Left lung (tissue), 14 donors: ENCODE measurements at regions of chr12 and their contacts with region 1.

Region 1: GRCh38 chr12:54324617-54325441 is at the start of gene COPZ1:
- DNase-seq: peak; percentile 94 to 98 (median 95)
- ATAC-seq: peak; percentile 95
- H3K4me3 ChIP-seq: peak within 1 kb of the TSS; percentile 71 to 87
- H3K27ac ChIP-seq: peak within 1 kb of the TSS; percentile 88
- H3K4me1 ChIP-seq: peaks cover 9 to 59% of the 10 kb centered on the region in 2 donors
- H3K27me3 ChIP-seq: no peaks in the 10 kb centered on the region
- CTCF ChIP-seq: peak; percentile 65 to 71
- polyA plus RNA-seq, gene COPZ1: 183 to 232 (median 219) TPM

Region 2: DNA sequence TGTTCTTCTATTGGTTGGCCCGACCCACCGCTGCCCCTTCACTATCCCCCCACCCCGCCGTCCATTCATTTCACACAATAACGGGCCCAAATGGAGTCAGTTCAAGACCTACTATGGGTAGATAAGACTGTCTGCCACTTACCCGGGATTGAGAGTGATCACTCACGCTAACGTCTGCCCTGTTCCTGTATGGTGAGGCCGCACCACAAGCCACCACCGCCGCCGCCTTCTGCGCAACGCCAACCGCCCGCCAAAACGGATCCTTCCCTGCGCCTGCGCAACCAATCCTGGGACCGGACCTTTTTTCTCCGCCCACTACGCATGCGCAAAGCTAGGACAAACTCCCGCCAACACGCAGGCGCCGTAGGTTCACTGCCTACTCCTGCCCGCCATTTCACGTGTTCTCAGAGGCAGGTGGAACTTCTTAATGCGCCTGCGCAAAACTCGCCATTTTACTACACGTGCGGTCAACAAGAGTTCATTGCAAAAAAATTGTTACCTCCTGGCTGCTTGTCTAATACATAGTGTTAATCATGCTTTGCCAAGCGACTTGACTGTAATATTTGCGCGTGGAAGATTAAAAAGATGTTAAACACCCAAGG is 44.9 kb before region 1 on chr12 and contains the start of gene CBX5:
- intact Hi-C with region 1: loop called in 1 of 2 experiments (anchors 5 kb)
- DNase-seq: peak; percentile 97 to 100 (median 99)
- ATAC-seq: peak; percentile 66
- H3K4me3 ChIP-seq: peak within 1 kb of the TSS; percentile 53 to 90
- H3K27ac ChIP-seq: peak within 1 kb of the TSS; percentile 94 to 95
- H3K4me1 ChIP-seq: peaks cover 44 to 64% of the 10 kb centered on the region in 2 donors
- H3K27me3 ChIP-seq: no peaks in the 10 kb centered on the region
- CTCF ChIP-seq: no peak
- polyA plus RNA-seq, gene CBX5: 105 to 134 (median 114) TPM

Region 3: GRCh38 chr12:54521293-54522060 is 196.6 kb after region 1 on chr12:
- intact Hi-C with region 1: no loop called
- DNase-seq: no peak
- ATAC-seq: no peak
- H3K4me3 ChIP-seq: no peak overlapping the region
- H3K27ac ChIP-seq: no peak overlapping the region
- H3K4me1 ChIP-seq: no peaks in the 10 kb centered on the region
- H3K27me3 ChIP-seq: no peaks in the 10 kb centered on the region
- CTCF ChIP-seq: no peak